ENCODE measurements at regions of chr2 and their contacts with region 1.

Region 1: GRCh38 chr2:160279813-160280465 is 79.9 kb upstream of the ITGB6 start:
- DNase-seq: no peak
- ATAC-seq: no peak

Region 2: GRCh38 chr2:160984426-160985077 is 704.6 kb after region 1 on chr2:
- intact Hi-C with region 1: loop called (anchors 10 kb)
- DNase-seq: peak; percentile 48
- ATAC-seq: peak; percentile 95

Measured in Right ventricle myocardium superior (tissue), 1 donor.